Activated CD4-positive, alpha-beta T cell treated with anti-CD3 and anti-CD28 coated beads, Interleukin-2, amount 10 ng/mL, durations not matched to agents 24 days and 14 days (primary cell): ENCODE measurements at regions of chr10 and their contacts with region 1.

Region 1: GRCh38 chr10:31864834-31865518 is 63.7 kb downstream of the ARHGAP12 start:
- DNase-seq: no peak
- H3K4me3 Mint-ChIP-seq: no peak overlapping the region
- H3K27ac Mint-ChIP-seq: no peak overlapping the region
- H3K4me1 Mint-ChIP-seq: peaks cover 3% of the 10 kb centered on the region
- H3K27me3 Mint-ChIP-seq: no peaks in the 10 kb centered on the region

Region 2: DNA sequence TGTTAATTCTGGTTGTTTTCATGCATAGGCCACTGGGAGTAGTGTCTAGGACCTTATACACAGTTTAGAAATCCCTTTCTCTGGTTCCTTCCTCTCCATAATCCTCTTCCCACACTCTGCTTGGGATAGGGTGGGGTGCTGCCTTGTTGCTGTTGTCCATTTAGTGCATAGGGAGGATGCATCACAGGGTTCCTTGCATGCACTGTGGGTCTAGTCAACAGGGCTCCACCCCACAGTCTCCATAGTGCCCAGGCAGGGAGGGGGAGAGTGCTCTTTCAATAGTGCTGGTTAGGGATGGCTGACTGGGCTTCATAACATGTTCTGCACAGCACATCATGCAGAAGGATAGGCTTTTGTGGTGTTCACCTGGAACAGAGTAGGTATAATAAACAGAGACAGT is 17.5 kb before region 1 on chr10:
- intact Hi-C with region 1: no loop called
- DNase-seq: no peak
- H3K4me3 Mint-ChIP-seq: no peak overlapping the region
- H3K27ac Mint-ChIP-seq: no peak overlapping the region
- H3K4me1 Mint-ChIP-seq: peaks cover 5% of the 10 kb centered on the region
- H3K27me3 Mint-ChIP-seq: peaks cover 2% of the 10 kb centered on the region

Region 3: DNA sequence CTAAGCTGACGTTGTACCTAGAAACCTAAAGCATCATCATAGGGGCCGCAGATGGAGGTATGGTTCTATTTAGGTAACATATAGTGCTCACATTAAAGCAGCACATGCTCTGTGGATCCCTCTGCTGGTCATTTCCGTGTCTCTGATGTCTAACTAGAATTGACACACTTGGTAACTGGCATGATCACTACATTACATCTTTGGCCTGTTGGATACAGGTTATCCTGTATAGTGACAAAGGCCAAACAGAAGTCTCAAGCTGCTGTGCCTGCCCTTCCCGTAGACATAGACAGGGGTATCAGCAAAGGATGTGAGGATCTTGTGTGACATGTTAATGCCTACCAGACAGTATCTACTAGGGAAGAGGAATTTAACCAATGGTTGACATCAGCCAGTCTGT is 140.1 kb after region 1 on chr10:
- intact Hi-C with region 1: loop called (anchors 1 kb)
- DNase-seq: peak; percentile 82
- H3K4me3 Mint-ChIP-seq: no peak overlapping the region
- H3K27ac Mint-ChIP-seq: no peak overlapping the region
- H3K4me1 Mint-ChIP-seq: peaks cover 8% of the 10 kb centered on the region
- H3K27me3 Mint-ChIP-seq: no peaks in the 10 kb centered on the region

Region 4: GRCh38 chr10:32171204-32171603 is 306.2 kb after region 1 on chr10:
- intact Hi-C with region 1: loop called (anchors 10 kb)
- DNase-seq: no peak
- H3K4me3 Mint-ChIP-seq: no peak overlapping the region
- H3K27ac Mint-ChIP-seq: no peak overlapping the region
- H3K4me1 Mint-ChIP-seq: peaks cover 4% of the 10 kb centered on the region
- H3K27me3 Mint-ChIP-seq: no peaks in the 10 kb centered on the region

Region 5: DNA sequence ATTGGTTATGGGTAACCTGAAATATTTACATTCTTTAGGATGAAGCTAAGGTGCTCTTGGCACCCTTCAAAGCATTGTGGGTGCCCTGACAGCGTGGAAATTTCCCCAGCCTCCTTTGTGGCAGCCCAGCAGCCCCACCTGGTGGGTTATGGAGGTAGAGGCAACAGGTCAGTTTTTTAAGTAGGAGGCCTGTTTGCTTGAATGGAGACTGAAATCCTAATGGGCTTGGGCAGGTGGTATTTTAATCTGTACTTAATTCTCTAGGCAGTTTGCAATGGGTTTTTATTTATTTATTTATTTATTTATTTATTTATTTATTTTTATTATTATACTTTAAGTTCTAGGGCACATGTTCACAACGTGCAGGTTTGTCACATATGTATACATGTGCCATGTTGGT is 342.6 kb after region 1 on chr10:
- intact Hi-C with region 1: loop called (anchors 1 kb)
- DNase-seq: peak; percentile 89
- H3K4me3 Mint-ChIP-seq: no peak overlapping the region
- H3K27ac Mint-ChIP-seq: no peak overlapping the region
- H3K4me1 Mint-ChIP-seq: peaks cover 6% of the 10 kb centered on the region
- H3K27me3 Mint-ChIP-seq: peaks cover 3% of the 10 kb centered on the region